A549 (cell line): ENCODE measurements at regions of chr2 and their contacts with region 1.

Region 1: DNA sequence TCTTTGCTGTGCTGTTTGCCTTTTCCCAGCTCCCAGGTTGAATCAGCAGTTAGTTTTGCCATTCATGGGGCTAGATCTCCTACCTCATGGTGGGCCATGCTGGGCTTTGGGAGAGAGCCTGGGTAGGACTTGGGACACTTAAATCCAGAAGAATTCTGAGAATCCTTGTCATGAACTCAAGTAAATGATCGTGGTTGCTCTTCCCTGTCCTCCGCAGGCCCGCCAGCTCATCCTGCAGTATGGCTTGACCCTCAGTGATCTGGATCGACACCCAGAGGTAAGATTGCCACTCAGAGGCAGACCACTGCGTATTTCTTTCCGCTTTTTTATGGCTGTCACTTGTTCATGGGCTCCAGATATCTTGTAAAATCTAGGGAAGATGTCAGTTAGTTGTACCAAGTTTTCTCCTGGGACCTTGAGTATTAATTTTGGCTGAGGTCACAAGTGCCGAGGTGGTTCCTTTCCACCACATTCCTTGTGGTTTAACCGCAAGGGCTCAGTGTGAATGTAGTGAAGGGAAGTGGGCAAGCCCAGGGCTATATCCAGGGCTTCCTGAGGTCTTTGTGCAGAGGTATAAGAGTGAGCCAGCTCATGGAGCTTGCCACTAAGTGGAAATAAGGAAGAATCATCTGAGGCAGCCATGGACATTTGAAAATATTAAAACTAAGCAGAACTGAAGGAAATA is 37.7 kb downstream of the RPIA start:
- DNase-seq: no peak
- ATAC-seq: no peak
- H3K4me3 ChIP-seq: no peak overlapping the region
- H3K27ac ChIP-seq: no peak overlapping the region
- H3K4me1 ChIP-seq: no peaks in the 10 kb centered on the region
- CTCF ChIP-seq: no peak
- EP300 ChIP-seq: no peak
- POLR2A ChIP-seq: no peak
- RAD21 ChIP-seq: no peak

Region 2: GRCh38 chr2:88711903-88712302 is 17.3 kb before region 1 on chr2:
- CTCF ChIA-PET with region 1: no interaction called
- POLR2A ChIA-PET with region 1: no interaction called
- DNase-seq: no peak
- ATAC-seq: no peak
- H3K4me3 ChIP-seq: no peak overlapping the region
- H3K27ac ChIP-seq: no peak overlapping the region
- H3K4me1 ChIP-seq: no peaks in the 10 kb centered on the region
- CTCF ChIP-seq: no peak
- EP300 ChIP-seq: no peak
- POLR2A ChIP-seq: no peak
- RAD21 ChIP-seq: no peak

Region 3: GRCh38 chr2:88739985-88740600 is 10.9 kb after region 1 on chr2:
- CTCF ChIA-PET with region 1: interaction called, 10 read pairs
- POLR2A ChIA-PET with region 1: no interaction called
- DNase-seq: peak; percentile 64 to 78
- ATAC-seq: peak; percentile 91 to 95
- H3K4me3 ChIP-seq: no peak overlapping the region
- H3K27ac ChIP-seq: no peak overlapping the region
- H3K4me1 ChIP-seq: peaks cover 14% of the 10 kb centered on the region
- CTCF ChIP-seq: peak; percentile 93
- EP300 ChIP-seq: no peak
- POLR2A ChIP-seq: no peak
- RAD21 ChIP-seq: peak; percentile 74 to 78